CD4-positive, alpha-beta memory T cell (primary cell): ENCODE measurements at regions of chr6 and their contacts with region 1.

Region 1: GRCh38 chr6:154156135-154156896 is 117.3 kb downstream of the OPRM1 start:
- DNase-seq: peak; percentile 48 to 76 (median 56)
- H3K4me3 ChIP-seq: peak overlapping the region; percentile 32 to 46
- H3K4me3 Mint-ChIP-seq: peak overlapping the region; percentile 67 to 92 (median 84)
- H3K27ac ChIP-seq: peak overlapping the region; percentile 72
- H3K27ac Mint-ChIP-seq: peak overlapping the region; percentile 84 to 94 (median 93)
- H3K4me1 ChIP-seq: peaks cover 45% of the 10 kb centered on the region
- H3K4me1 Mint-ChIP-seq: peaks cover 38 to 66% (median 49%) of the 10 kb centered on the region in 4 donors
- H3K27me3 ChIP-seq: no peaks in the 10 kb centered on the region
- H3K27me3 Mint-ChIP-seq: no peaks in the 10 kb centered on the region

Region 2: DNA sequence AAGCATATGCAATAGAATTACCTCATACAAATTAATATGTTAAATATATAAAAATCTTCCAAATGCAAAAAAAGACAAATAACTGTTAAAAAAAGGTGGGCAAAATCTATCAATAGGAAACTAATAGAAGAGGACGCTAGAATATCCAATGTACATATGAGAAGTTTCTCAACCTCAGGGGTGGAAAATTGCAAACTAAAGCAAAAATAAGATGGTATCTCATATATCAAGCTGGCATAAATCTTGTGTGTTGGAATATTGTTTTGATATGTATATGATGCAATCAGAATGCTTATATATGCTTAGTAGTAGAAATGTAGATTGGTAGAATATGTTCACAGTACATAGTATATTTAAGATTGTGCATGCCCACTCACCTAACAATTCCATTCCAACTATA is 512.3 kb before region 1 on chr6:
- CTCF ChIA-PET with region 1: no interaction called
- POLR2A ChIA-PET with region 1: no interaction called
- intact Hi-C with region 1: no loop called
- DNase-seq: no peak
- H3K4me3 ChIP-seq: no peak overlapping the region
- H3K4me3 Mint-ChIP-seq: no peak overlapping the region
- H3K27ac ChIP-seq: no peak overlapping the region
- H3K27ac Mint-ChIP-seq: no peak overlapping the region
- H3K4me1 ChIP-seq: no peaks in the 10 kb centered on the region
- H3K4me1 Mint-ChIP-seq: no peaks in the 10 kb centered on the region
- H3K27me3 ChIP-seq: no peaks in the 10 kb centered on the region
- H3K27me3 Mint-ChIP-seq: no peaks in the 10 kb centered on the region

Region 3: GRCh38 chr6:154301839-154302752 is 145.8 kb after region 1 on chr6:
- CTCF ChIA-PET with region 1: no interaction called
- POLR2A ChIA-PET with region 1: no interaction called
- intact Hi-C with region 1: no loop called
- DNase-seq: peak in 1 of 5 donors; percentile 1
- H3K4me3 ChIP-seq: no peak overlapping the region
- H3K4me3 Mint-ChIP-seq: peak overlapping the region in 1 of 8 donors; percentile 13
- H3K27ac ChIP-seq: no peak overlapping the region
- H3K27ac Mint-ChIP-seq: no peak overlapping the region
- H3K4me1 ChIP-seq: peaks cover 8% of the 10 kb centered on the region
- H3K4me1 Mint-ChIP-seq: peaks cover 5 to 7% (median 6%) of the 10 kb centered on the region in 4 donors
- H3K27me3 ChIP-seq: no peaks in the 10 kb centered on the region
- H3K27me3 Mint-ChIP-seq: no peaks in the 10 kb centered on the region

Region 4: GRCh38 chr6:154370545-154370944 is 214.2 kb after region 1 on chr6:
- CTCF ChIA-PET with region 1: interaction called, 20 read pairs
- POLR2A ChIA-PET with region 1: no interaction called
- intact Hi-C with region 1: loop called (anchors 1 kb)
- DNase-seq: peak in 4 of 5 donors; percentile 1 to 14 (median 10)
- H3K4me3 ChIP-seq: no peak overlapping the region
- H3K4me3 Mint-ChIP-seq: peak overlapping the region in 2 of 8 donors; percentile 14 to 45
- H3K27ac ChIP-seq: no peak overlapping the region
- H3K27ac Mint-ChIP-seq: no peak overlapping the region
- H3K4me1 ChIP-seq: no peaks in the 10 kb centered on the region
- H3K4me1 Mint-ChIP-seq: peaks cover 0 to 2% (median under 1%) of the 10 kb centered on the region in 4 donors
- H3K27me3 ChIP-seq: no peaks in the 10 kb centered on the region
- H3K27me3 Mint-ChIP-seq: peaks cover 0 to 7% of the 10 kb centered on the region in 2 donors